ENCODE measurements at regions of chr10 and their contacts with region 1.

Region 1: GRCh38 chr10:69123747-69124562 is at the start of gene VPS26A:
- DNase-seq: peak; percentile 97 to 100 (median 99)
- ATAC-seq: peak; percentile 99
- H3K4me3 ChIP-seq: peak within 1 kb of the TSS; percentile 85
- H3K4me3 Mint-ChIP-seq: peak within 1 kb of the TSS; percentile 93 to 99 (median 96)
- H3K27ac ChIP-seq: peak within 1 kb of the TSS; percentile 94
- H3K27ac Mint-ChIP-seq: peak within 1 kb of the TSS; percentile 92 to 98 (median 97)
- H3K4me1 ChIP-seq: peaks cover 8 to 16% of the 10 kb centered on the region in 2 donors
- H3K4me1 Mint-ChIP-seq: peaks cover 5 to 37% (median 35%) of the 10 kb centered on the region in 7 donors
- H3K27me3 ChIP-seq: no peaks in the 10 kb centered on the region
- H3K27me3 Mint-ChIP-seq: no peaks in the 10 kb centered on the region
- total RNA-seq, gene VPS26A: 25.5 to 35.0 (median 29.5) TPM

Region 2: GRCh38 chr10:67764012-67764822 is 1359.7 kb before region 1 on chr10:
- CTCF ChIA-PET with region 1: no interaction called
- POLR2A ChIA-PET with region 1: no interaction called
- intact Hi-C with region 1: loop called in 1 of 2 experiments (anchors 5 kb)
- DNase-seq: peak; percentile 96 to 99 (median 98)
- ATAC-seq: peak; percentile 88
- H3K4me3 ChIP-seq: peak overlapping the region; percentile 99
- H3K4me3 Mint-ChIP-seq: peak overlapping the region; percentile 81 to 99 (median 94)
- H3K27ac ChIP-seq: peak overlapping the region; percentile 81
- H3K27ac Mint-ChIP-seq: peak overlapping the region; percentile 95 to 100 (median 100)
- H3K4me1 ChIP-seq: peaks cover 4 to 6% of the 10 kb centered on the region in 2 donors
- H3K4me1 Mint-ChIP-seq: peaks cover 0 to 37% (median 14%) of the 10 kb centered on the region in 7 donors
- H3K27me3 ChIP-seq: no peaks in the 10 kb centered on the region
- H3K27me3 Mint-ChIP-seq: peaks cover 0 to 16% (median 0%) of the 10 kb centered on the region in 5 donors

Region 3: GRCh38 chr10:68526626-68527307 is 597.2 kb before region 1 on chr10:
- CTCF ChIA-PET with region 1: no interaction called
- POLR2A ChIA-PET with region 1: no interaction called
- intact Hi-C with region 1: loop called in 1 of 2 experiments (anchors 10 kb)
- DNase-seq: peak in 1 of 9 donors; percentile 4
- ATAC-seq: no peak
- H3K4me3 ChIP-seq: peak overlapping the region; percentile 91
- H3K4me3 Mint-ChIP-seq: peak overlapping the region; percentile 87 to 94 (median 92)
- H3K27ac ChIP-seq: peak overlapping the region; percentile 96
- H3K27ac Mint-ChIP-seq: peak overlapping the region; percentile 78 to 97 (median 95)
- H3K4me1 ChIP-seq: peaks cover 0 to 5% of the 10 kb centered on the region in 2 donors
- H3K4me1 Mint-ChIP-seq: peaks cover 0 to 20% (median 7%) of the 10 kb centered on the region in 7 donors
- H3K27me3 ChIP-seq: no peaks in the 10 kb centered on the region
- H3K27me3 Mint-ChIP-seq: no peaks in the 10 kb centered on the region

Region 4: GRCh38 chr10:68988530-68989316 is 135.2 kb before region 1 on chr10 and contains the start of gene KIFBP:
- CTCF ChIA-PET with region 1: interaction called, 4 read pairs
- POLR2A ChIA-PET with region 1: interaction called, 3 read pairs
- intact Hi-C with region 1: loop called (anchors 1 kb)
- DNase-seq: peak; percentile 50 to 84 (median 82)
- ATAC-seq: peak; percentile 93
- H3K4me3 ChIP-seq: peak within 1 kb of the TSS; percentile 89
- H3K4me3 Mint-ChIP-seq: peak within 1 kb of the TSS; percentile 94 to 100 (median 99)
- H3K27ac ChIP-seq: peak within 1 kb of the TSS; percentile 82
- H3K27ac Mint-ChIP-seq: peak within 1 kb of the TSS; percentile 82 to 99 (median 94)
- H3K4me1 ChIP-seq: peaks cover 15 to 20% of the 10 kb centered on the region in 2 donors
- H3K4me1 Mint-ChIP-seq: peaks cover 31 to 65% (median 56%) of the 10 kb centered on the region in 7 donors
- H3K27me3 ChIP-seq: no peaks in the 10 kb centered on the region
- H3K27me3 Mint-ChIP-seq: peaks cover 0 to 2% (median 0%) of the 10 kb centered on the region in 5 donors
- total RNA-seq, gene KIFBP: 4.5 to 18.1 (median 14.0) TPM

Region 5: GRCh38 chr10:69092959-69093850 is 30.8 kb before region 1 on chr10:
- CTCF ChIA-PET with region 1: interaction called, 12 read pairs
- POLR2A ChIA-PET with region 1: interaction called, 3 read pairs
- intact Hi-C with region 1: loop called (anchors 1 kb)
- DNase-seq: peak; percentile 43 to 89 (median 85)
- ATAC-seq: peak; percentile 61
- H3K4me3 ChIP-seq: peak overlapping the region; percentile 19
- H3K4me3 Mint-ChIP-seq: peak overlapping the region in 7 of 10 donors; percentile 4 to 36 (median 15)
- H3K27ac ChIP-seq: peak overlapping the region; percentile 54
- H3K27ac Mint-ChIP-seq: peak overlapping the region; percentile 23 to 90 (median 63)
- H3K4me1 ChIP-seq: peaks cover 28 to 37% of the 10 kb centered on the region in 2 donors
- H3K4me1 Mint-ChIP-seq: peaks cover 23 to 64% (median 55%) of the 10 kb centered on the region in 7 donors
- H3K27me3 ChIP-seq: no peaks in the 10 kb centered on the region
- H3K27me3 Mint-ChIP-seq: no peaks in the 10 kb centered on the region

Region 6: DNA sequence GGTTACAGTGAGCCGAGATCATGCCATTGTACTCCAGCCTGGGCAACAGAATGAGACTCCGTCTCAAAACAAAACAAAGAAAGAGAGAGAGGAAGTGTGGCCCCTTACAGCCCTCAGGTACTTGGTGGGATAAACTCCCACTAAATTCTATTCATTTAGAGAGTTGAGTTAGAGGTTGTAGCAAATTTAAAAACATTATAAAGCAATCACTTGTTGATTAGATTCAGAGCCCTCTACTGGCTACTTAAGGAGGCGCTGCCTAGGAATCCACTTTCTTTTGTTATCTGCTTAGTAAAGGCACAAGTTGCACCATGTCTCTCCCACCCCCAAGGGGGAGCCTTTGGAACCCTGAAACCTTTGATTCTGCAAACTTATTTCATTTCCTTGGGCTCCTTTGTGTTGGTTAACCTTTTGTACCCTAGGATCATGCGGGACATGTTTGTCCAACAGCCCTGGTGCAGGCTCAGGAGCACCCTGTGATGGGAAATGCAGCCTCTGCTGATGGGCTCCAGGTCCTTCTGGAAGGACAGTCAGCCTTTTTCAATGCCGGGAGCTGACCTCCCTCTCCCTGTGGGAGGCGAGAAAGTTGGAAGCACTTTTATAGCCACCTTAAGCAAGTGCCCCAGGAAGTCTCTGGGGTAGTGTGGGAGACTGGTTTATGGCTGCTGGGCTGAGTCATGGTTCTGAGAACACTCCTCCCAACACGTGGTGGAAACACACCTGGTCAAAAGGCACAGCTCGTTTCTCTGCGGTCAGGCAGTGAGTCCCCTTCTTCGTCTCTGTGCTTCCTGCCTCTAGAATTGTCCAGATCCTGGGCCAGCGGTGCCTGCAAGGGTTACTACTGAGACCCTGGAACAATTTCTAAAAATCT is 98.4 kb after region 1 on chr10:
- CTCF ChIA-PET with region 1: interaction called, 3 read pairs
- POLR2A ChIA-PET with region 1: no interaction called
- intact Hi-C with region 1: loop called (anchors 1 to 2 kb)
- DNase-seq: peak in 8 of 9 donors; percentile 21 to 80 (median 41)
- ATAC-seq: peak; percentile 88
- H3K4me3 ChIP-seq: peak overlapping the region; percentile 34
- H3K4me3 Mint-ChIP-seq: peak overlapping the region in 4 of 10 donors; percentile 17 to 83 (median 50)
- H3K27ac ChIP-seq: no peak overlapping the region
- H3K27ac Mint-ChIP-seq: peak overlapping the region in 4 of 9 donors; percentile 18 to 91 (median 56)
- H3K4me1 ChIP-seq: peaks cover 11 to 37% of the 10 kb centered on the region in 2 donors
- H3K4me1 Mint-ChIP-seq: peaks cover 0 to 47% (median 15%) of the 10 kb centered on the region in 7 donors
- H3K27me3 ChIP-seq: no peaks in the 10 kb centered on the region
- H3K27me3 Mint-ChIP-seq: no peaks in the 10 kb centered on the region

Region 7: GRCh38 chr10:69408318-69409175 is 284.6 kb after region 1 on chr10:
- CTCF ChIA-PET with region 1: interaction called, 4 read pairs
- POLR2A ChIA-PET with region 1: no interaction called
- intact Hi-C with region 1: loop called (anchors 1 kb)
- DNase-seq: peak; percentile 82 to 92 (median 90)
- ATAC-seq: peak; percentile 94
- H3K4me3 ChIP-seq: peak overlapping the region; percentile 54
- H3K4me3 Mint-ChIP-seq: peak overlapping the region; percentile 65 to 83 (median 74)
- H3K27ac ChIP-seq: peak overlapping the region; percentile 76
- H3K27ac Mint-ChIP-seq: peak overlapping the region; percentile 82 to 96 (median 92)
- H3K4me1 ChIP-seq: peaks cover 13 to 14% of the 10 kb centered on the region in 2 donors
- H3K4me1 Mint-ChIP-seq: peaks cover 14 to 28% (median 20%) of the 10 kb centered on the region in 7 donors
- H3K27me3 ChIP-seq: no peaks in the 10 kb centered on the region
- H3K27me3 Mint-ChIP-seq: no peaks in the 10 kb centered on the region

Measured in naive thymus-derived CD4-positive, alpha-beta T cell (primary cell).